Motor neuron (in vitro differentiated cells): ENCODE measurements at regions of chr16 and their contacts with region 1.

Region 1: GRCh38 chr16:69787883-69788282 is 25.8 kb downstream of the WWP2 start:
- ATAC-seq: no peak
- H3K4me3 ChIP-seq: no peak overlapping the region
- H3K27ac ChIP-seq: no peak overlapping the region
- H3K4me1 ChIP-seq: no peaks in the 10 kb centered on the region

Region 2: GRCh38 chr16:69924777-69925191 is 136.9 kb after region 1 on chr16:
- in situ Hi-C with region 1: loop called in 1 of 9 experiments (anchors 10 kb)
- ATAC-seq: peak in 2 of 8 experiments; percentile 87 to 90
- H3K4me3 ChIP-seq: no peak overlapping the region
- H3K27ac ChIP-seq: no peak overlapping the region
- H3K4me1 ChIP-seq: peaks cover 0 to 5% of the 10 kb centered on the region in 2 donors